WTC11 (cell line): ENCODE measurements at regions of chr17 and their contacts with region 1.

Region 1: DNA sequence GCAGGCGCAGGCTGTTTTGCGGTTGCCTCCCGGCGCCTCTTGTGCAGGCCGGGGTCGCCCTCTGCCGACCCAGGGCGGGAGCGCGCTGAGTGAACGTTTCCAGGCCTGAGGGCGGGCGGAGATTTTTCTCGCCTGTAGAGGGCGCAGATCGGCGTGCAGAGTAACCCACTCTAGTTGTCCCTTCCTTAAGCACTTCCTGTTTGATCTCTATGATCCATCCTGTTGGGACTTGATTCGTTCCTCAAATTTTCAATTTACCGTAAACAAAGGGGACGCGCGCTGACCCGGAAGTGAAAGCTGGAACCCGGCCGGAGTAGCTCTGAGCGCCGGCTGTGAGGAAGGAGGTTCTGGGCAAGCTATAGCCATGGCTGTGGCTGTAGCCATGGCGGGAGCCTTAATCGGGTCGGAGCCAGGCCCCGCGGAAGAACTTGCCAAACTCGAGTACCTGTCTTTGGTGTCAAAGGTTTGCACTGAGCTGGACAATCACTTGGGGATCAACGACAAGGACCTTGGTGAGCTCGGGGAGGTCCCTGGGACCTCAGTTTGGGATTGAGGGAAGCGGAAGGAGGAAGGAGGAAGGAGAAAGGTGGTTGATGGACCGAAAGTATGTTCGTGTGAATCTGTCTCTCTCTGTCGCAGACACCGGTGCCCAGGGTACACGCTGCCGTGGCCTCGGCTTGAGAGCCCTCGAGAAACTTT is at the start of gene DHX8:
- DNase-seq: peak; percentile 97
- ATAC-seq: peak; percentile 96
- H3K4me3 Mint-ChIP-seq: peak within 1 kb of the TSS; percentile 100
- H3K27ac Mint-ChIP-seq: peak within 1 kb of the TSS; percentile 100
- H3K4me1 Mint-ChIP-seq: peaks cover 30% of the 10 kb centered on the region
- H3K27me3 Mint-ChIP-seq: no peaks in the 10 kb centered on the region
- CTCF ChIP-seq: peak; percentile 98
- total RNA-seq, gene DHX8: 47.9 to 58.5 TPM (median 58.3 TPM) in 3 replicates

Region 2: DNA sequence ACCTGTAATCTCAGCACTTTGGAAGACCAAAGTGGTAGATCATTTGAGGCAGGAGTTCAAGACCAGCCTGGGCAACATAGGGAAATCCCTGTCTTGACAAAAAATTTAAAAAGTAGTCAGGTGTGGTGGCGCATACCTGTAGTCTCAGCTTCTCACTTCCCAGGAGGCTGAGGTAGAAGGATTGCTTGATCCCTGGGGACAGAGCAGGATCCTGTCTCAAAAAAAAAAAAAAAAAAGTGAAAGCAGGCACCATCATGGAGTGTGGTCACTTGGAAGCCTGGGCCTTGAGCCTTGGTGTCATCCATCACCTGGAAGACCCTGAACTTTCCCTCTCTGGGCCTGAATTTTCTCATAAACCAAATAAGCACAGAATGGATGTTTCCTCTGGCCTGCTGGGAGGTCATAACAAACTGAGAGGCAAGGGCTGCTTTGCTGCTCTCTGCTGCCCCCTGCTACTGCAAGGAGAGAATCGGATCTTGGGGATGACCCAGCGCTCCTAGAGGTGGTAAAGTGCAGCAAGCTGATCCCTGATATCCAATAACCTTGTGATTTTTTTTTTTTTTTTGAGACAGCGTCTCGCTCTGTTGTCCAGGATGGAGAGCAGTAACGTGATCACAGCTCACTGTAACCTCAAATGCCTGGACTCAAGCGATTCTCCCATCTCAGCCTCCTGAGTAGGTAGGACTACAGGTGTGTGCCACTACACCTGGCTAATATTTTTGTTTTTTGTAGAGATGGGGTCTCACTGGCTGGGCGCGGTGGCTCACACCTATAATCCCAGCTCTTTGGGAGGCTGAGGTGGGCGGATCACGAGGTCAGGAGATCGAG is 174.1 kb before region 1 on chr17:
- CTCF ChIA-PET with region 1: no interaction called
- POLR2A ChIA-PET with region 1: no interaction called
- DNase-seq: no peak
- ATAC-seq: no peak
- H3K4me3 Mint-ChIP-seq: no peak overlapping the region
- H3K27ac Mint-ChIP-seq: no peak overlapping the region
- H3K4me1 Mint-ChIP-seq: no peaks in the 10 kb centered on the region; the same call in 1 of the 2 replicates
- H3K27me3 Mint-ChIP-seq: peaks cover 2% of the 10 kb centered on the region; the same call in 1 of the 2 replicates
- CTCF ChIP-seq: no peak

Region 3: DNA sequence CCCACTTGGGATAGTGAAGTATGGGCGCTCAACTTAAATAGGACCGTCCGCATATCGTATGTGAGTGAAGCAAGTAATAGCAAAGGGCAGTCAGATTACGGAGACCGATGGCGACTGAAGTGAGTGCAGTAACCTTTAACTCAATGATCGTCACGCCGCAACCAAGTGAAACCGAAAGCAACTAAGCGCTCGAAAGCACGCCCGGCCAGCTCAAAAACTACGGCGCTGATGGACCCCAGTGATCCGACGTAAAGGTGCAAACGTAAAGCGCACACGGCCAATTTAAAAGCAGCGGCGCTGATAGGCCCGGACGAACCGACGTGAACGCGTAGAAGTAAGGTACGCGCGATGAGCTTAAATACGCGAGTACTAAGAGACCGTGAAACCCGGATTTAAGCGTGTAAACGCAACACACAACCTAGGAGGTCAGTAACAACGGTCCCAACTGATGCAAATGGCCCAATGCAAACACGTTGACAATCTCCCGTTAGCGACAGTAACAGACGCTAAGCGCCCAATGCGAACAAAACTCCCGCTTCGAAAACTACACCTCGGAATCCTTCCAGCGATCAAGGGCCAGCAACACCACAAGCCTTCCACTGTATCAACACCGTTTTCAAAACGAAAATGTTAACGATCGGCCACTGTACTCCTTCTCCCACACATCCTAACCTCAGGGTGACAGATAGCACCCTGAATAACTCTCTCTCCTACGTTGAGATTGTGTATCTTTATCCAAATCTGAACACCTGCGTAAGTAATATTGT is 122.9 kb before region 1 on chr17:
- CTCF ChIA-PET with region 1: interaction called, 10 read pairs
- POLR2A ChIA-PET with region 1: interaction called, 3 read pairs
- DNase-seq: peak; percentile 68
- ATAC-seq: peak; percentile 83
- H3K4me3 Mint-ChIP-seq: peak overlapping the region; percentile 85
- H3K27ac Mint-ChIP-seq: peak overlapping the region; percentile 100
- H3K4me1 Mint-ChIP-seq: peaks cover 21% of the 10 kb centered on the region
- H3K27me3 Mint-ChIP-seq: peaks cover 21% of the 10 kb centered on the region
- CTCF ChIP-seq: no peak

Region 4: DNA sequence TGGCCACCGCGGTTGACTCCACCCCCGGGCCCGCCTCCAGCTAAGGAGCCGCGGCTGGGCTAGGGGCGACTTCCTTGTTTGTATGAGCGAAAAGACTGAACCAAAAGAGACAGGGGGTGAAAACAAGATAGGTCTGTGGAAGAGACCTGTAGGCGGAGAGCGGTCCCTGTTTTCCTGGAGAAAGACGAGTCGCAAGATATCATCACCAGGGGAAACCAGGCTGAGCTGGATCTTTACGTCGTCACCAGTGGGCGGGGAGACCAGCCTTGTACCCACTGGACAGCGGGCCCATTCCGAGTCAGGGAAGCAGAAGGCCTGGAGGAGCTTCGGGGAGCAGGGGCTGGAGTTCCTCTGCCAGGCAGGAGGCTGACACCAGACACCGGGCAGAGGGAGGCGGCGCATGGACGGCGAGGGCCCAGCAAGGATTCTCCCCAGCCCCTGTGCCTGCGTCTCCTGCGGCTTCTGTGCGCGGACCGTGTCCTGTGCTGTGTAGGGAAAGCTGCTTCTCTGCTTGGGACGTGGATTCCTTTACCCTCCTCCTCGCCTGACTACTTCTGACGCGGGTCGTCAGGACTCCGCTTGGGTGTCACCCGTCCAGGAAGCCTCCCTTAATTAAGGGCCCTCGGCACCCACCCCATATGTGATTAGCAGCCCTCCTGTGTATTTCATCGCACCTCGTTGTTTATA is 95.3 kb before region 1 on chr17:
- CTCF ChIA-PET with region 1: interaction called, 178 read pairs
- POLR2A ChIA-PET with region 1: interaction called, 7 read pairs
- DNase-seq: peak; percentile 91
- ATAC-seq: peak; percentile 89
- H3K4me3 Mint-ChIP-seq: peak overlapping the region; percentile 87
- H3K27ac Mint-ChIP-seq: peak overlapping the region; percentile 99
- H3K4me1 Mint-ChIP-seq: peaks cover 12% of the 10 kb centered on the region; the same call in 1 of the 2 replicates
- H3K27me3 Mint-ChIP-seq: peaks cover 2% of the 10 kb centered on the region; the same call in 1 of the 2 replicates
- CTCF ChIP-seq: no peak

Region 5: GRCh38 chr17:43406676-43407645 is 76.9 kb before region 1 on chr17:
- CTCF ChIA-PET with region 1: interaction called, 99 read pairs
- POLR2A ChIA-PET with region 1: no interaction called
- DNase-seq: no peak
- ATAC-seq: peak; percentile 55
- H3K4me3 Mint-ChIP-seq: no peak overlapping the region
- H3K27ac Mint-ChIP-seq: no peak overlapping the region; the same call in 1 of the 2 replicates
- H3K4me1 Mint-ChIP-seq: peaks cover 12% of the 10 kb centered on the region
- H3K27me3 Mint-ChIP-seq: no peaks in the 10 kb centered on the region
- CTCF ChIP-seq: no peak

Region 6: DNA sequence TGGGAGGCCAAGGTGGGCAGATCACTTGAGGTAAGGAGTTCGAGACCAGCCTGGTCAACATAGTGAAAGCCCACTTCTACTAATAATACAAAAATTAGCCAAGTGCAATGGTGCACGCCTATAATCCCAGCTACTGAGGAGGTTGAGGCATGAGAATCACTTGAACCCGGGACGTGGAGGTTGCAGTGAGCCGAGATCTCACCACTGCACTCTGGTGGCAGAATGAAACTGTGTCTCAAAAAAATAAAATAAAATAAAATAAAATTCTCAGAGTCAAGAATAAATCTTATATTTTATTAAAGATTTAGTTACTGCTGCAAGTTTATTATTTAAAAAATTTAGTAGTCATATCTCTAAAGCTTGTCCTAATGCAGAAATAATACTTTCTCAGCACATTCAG is 55.3 kb before region 1 on chr17:
- CTCF ChIA-PET with region 1: interaction called, 10 read pairs
- POLR2A ChIA-PET with region 1: no interaction called
- DNase-seq: no peak
- ATAC-seq: no peak
- H3K4me3 Mint-ChIP-seq: no peak overlapping the region
- H3K27ac Mint-ChIP-seq: no peak overlapping the region
- H3K4me1 Mint-ChIP-seq: peaks cover 14% of the 10 kb centered on the region
- H3K27me3 Mint-ChIP-seq: no peaks in the 10 kb centered on the region
- CTCF ChIP-seq: no peak

Region 7: DNA sequence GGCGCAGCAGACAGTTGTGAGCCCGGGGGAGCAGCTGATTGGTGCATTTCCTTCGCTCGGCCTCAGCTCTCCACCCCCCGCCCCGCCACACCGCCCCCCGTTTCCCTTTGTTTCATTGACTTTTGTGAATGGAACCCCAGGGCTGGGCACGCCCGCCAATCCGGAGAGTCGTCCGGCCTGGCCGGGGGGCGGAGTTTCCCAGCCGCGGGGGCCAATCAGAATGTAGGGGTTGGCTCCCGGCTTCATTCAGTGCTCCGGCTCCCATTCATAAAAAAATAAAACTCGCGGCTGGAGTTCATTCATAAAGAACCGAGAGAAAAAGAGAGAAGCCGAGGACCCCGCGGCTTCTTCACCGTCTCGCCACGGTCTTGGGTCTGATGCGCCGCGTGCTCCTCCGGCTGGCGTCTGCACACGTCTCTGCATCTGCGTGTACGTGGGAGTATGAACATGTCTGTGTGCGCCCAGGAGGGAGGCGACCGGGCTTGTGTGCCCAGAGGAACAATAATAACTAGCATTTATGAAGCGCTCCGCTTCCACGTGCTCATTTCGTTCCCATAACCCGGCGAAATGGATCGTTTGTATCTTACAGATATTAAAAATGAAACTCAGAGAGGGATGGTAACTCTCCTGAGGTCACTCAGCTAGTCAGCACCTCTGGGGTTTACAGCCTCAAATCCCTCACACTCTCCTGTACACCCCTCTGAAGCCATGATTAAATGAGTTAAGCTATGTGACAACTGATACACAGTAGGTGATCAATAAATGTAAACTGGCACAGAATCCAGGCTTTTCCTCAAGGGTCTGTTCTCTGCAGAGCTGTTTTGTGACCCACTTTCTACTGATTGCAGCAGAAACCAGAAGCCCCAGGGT is 62.7 kb after region 1 on chr17 and contains the start of gene ETV4:
- CTCF ChIA-PET with region 1: interaction called, 10 read pairs
- POLR2A ChIA-PET with region 1: interaction called, 4 read pairs
- DNase-seq: peak; percentile 98
- ATAC-seq: peak; percentile 63
- H3K4me3 Mint-ChIP-seq: peak within 1 kb of the TSS; percentile 89
- H3K27ac Mint-ChIP-seq: peak within 1 kb of the TSS; percentile 94
- H3K4me1 Mint-ChIP-seq: peaks cover 64% of the 10 kb centered on the region
- H3K27me3 Mint-ChIP-seq: no peaks in the 10 kb centered on the region; the same call in 1 of the 2 replicates
- CTCF ChIP-seq: no peak
- total RNA-seq, gene ETV4: 147 to 195 TPM (median 147 TPM) in 3 replicates